GM12878 (cell line): ENCODE measurements at regions of chr11 and their contacts with region 1.

Region 1: DNA sequence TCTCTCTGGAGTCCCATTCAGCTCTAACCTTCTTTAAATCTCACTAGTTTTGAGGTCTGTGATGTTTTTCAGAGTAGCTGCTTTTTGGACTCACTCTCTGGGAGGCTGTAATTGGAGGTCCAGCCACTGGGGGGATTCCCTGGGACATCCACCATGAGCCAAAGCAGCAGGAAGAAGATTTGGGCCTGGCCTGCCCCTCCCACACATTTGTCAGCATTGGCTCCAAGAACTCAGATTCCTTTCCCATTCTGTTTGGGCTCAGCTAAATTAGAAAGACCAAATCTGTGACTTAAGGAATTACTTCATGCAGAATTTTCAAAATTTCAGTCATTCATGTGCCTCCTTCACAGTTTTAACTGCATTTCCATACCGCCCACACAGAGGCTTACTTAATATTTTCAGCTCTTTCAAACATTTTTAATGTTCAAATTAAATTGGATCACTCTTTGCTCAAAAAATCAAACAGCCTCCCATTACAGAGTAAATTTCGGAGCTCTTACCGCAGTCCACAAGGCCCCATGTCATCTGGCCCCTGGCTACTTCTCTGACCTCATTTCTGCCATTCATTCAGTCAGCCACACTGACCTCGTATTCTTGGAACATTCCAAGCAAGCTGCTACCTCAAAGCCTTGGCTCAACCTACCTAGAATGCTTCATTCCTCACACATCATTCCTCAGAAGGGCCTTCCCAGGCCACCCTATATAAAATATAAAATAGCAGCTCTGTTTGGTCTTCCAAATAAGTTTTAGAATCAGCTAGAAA is 54.5 kb upstream of the RRAS2 start:
- DNase-seq: no peak
- ATAC-seq: peak; percentile 22; the same call in 1 of the 3 replicates
- H3K4me3 ChIP-seq: no peak overlapping the region
- H3K27ac ChIP-seq: no peak overlapping the region
- H3K4me1 ChIP-seq: peaks cover 10% of the 10 kb centered on the region
- H3K27me3 ChIP-seq: no peaks in the 10 kb centered on the region
- CTCF ChIP-seq: peak in 1 of 3 experiments; percentile 32; a peak in 1 of 6 replicates
- EP300 ChIP-seq: no peak
- POLR2A ChIP-seq: no peak
- RAD21 ChIP-seq: no peak

Region 2: DNA sequence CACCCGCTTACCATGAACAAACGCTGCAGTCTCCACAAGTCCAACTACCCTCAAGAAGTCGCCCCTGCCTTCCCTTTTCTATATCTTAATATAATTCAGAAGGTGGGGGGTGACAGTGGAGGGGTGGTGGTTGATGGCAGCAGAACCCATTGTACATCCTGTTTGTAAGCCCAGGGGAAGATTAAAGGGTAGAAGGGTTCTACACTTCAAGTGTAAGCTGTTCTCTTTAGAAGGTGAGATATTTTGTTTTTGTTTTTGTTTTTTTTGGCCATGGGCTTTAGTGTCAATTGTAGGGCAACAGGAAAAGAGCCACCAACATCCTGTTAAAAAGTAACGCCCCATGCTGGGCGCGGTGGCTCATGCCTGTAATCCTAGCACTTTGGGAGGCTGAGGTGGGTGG is 19.6 kb before region 1 on chr11:
- CTCF ChIA-PET with region 1: no interaction called
- POLR2A ChIA-PET with region 1: no interaction called
- RAD21 ChIA-PET with region 1: no interaction called
- SMC1A ChIA-PET with region 1: no interaction called
- in situ Hi-C with region 1: no loop called
- intact Hi-C with region 1: no loop called
- DNase-seq: no peak
- ATAC-seq: no peak
- H3K4me3 ChIP-seq: no peak overlapping the region
- H3K27ac ChIP-seq: no peak overlapping the region
- H3K4me1 ChIP-seq: no peaks in the 10 kb centered on the region
- H3K27me3 ChIP-seq: peaks cover 0 to 4% of the 10 kb centered on the region in 2 experiments; a peak in 1 of 4 replicates
- CTCF ChIP-seq: no peak
- EP300 ChIP-seq: no peak
- POLR2A ChIP-seq: no peak
- RAD21 ChIP-seq: no peak

Region 3: GRCh38 chr11:14463623-14464022 is 50.1 kb after region 1 on chr11:
- CTCF ChIA-PET with region 1: no interaction called
- POLR2A ChIA-PET with region 1: no interaction called
- RAD21 ChIA-PET with region 1: no interaction called
- SMC1A ChIA-PET with region 1: no interaction called
- in situ Hi-C with region 1: no loop called
- intact Hi-C with region 1: no loop called
- DNase-seq: no peak
- ATAC-seq: no peak
- H3K4me3 ChIP-seq: no peak overlapping the region
- H3K27ac ChIP-seq: no peak overlapping the region
- H3K4me1 ChIP-seq: no peaks in the 10 kb centered on the region
- H3K27me3 ChIP-seq: no peaks in the 10 kb centered on the region
- CTCF ChIP-seq: no peak
- EP300 ChIP-seq: no peak
- POLR2A ChIP-seq: no peak
- RAD21 ChIP-seq: no peak

Region 4: GRCh38 chr11:14554959-14555358 is 141.5 kb after region 1 on chr11:
- CTCF ChIA-PET with region 1: no interaction called
- POLR2A ChIA-PET with region 1: interaction called, 10 read pairs
- RAD21 ChIA-PET with region 1: no interaction called
- SMC1A ChIA-PET with region 1: no interaction called
- in situ Hi-C with region 1: no loop called
- intact Hi-C with region 1: no loop called
- DNase-seq: no peak
- ATAC-seq: peak; percentile 37
- H3K4me3 ChIP-seq: no peak overlapping the region
- H3K27ac ChIP-seq: no peak overlapping the region
- H3K4me1 ChIP-seq: no peaks in the 10 kb centered on the region
- H3K27me3 ChIP-seq: no peaks in the 10 kb centered on the region
- CTCF ChIP-seq: no peak
- EP300 ChIP-seq: no peak
- POLR2A ChIP-seq: no peak
- RAD21 ChIP-seq: no peak